ENCODE measurements at regions of chr14 and their contacts with region 1.

Region 1: GRCh38 chr14:69574263-69574953 is at the start of gene CCDC177:
- DNase-seq: peak; percentile 80
- H3K4me3 Mint-ChIP-seq: peak within 1 kb of the TSS; percentile 58
- H3K27ac Mint-ChIP-seq: no peak within 1 kb of the TSS
- H3K4me1 Mint-ChIP-seq: peaks cover 11% of the 10 kb centered on the region
- H3K27me3 Mint-ChIP-seq: peaks cover 48% of the 10 kb centered on the region
- total RNA-seq, gene CCDC177: not detected

Region 2: DNA sequence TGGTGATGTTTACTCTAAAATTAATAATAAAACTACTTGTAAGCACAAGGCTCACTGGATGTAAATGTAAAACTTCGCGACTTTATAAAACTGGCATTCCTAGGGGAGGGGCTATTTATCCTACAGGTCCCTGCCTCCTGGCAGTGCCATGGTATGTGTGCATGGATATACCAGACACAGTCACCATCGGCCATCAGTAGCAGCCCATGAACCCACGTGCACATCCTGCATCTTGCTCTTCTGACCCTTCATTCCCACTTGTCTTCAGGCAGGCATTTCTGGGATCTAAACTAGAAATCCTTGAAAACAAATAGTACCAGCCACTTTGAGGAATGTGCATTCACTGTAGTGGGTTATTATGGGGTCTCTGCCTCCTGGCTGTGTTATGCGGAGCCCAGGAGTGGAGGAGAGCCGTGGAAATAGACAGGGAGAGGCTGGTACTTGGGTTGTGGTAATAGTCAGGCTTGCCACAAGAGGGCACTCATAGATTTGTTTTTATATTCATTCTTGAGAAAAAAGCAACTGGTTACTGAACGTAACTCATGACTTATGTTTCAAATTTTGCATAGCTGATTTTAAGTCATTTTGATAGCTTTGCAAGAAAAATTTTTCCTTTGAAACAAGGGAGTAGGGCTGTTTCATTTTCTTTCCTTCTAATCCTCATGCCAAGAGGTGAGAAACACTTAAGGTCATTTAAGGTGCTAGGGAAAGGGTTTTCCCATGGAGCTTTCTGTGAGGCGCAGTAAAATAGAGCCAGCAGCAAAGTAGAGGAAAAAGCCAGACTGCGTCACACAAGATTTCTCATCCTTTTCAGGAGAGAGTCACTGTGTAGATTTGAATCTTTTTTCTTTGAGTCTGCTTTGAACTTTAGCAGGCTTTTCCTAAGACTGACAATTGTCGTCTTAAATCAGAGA is 331.8 kb before region 1 on chr14:
- CTCF ChIA-PET with region 1: interaction called, 22 read pairs
- POLR2A ChIA-PET with region 1: no interaction called
- intact Hi-C with region 1: loop called (anchors 1 kb)
- DNase-seq: peak; percentile 62
- H3K4me3 Mint-ChIP-seq: no peak overlapping the region
- H3K27ac Mint-ChIP-seq: no peak overlapping the region
- H3K4me1 Mint-ChIP-seq: no peaks in the 10 kb centered on the region
- H3K27me3 Mint-ChIP-seq: no peaks in the 10 kb centered on the region

Region 3: GRCh38 chr14:69475194-69475818 is 99.1 kb before region 1 on chr14:
- CTCF ChIA-PET with region 1: interaction called, 12 read pairs
- POLR2A ChIA-PET with region 1: no interaction called
- intact Hi-C with region 1: no loop called
- DNase-seq: no peak
- H3K4me3 Mint-ChIP-seq: no peak overlapping the region
- H3K27ac Mint-ChIP-seq: no peak overlapping the region
- H3K4me1 Mint-ChIP-seq: no peaks in the 10 kb centered on the region
- H3K27me3 Mint-ChIP-seq: no peaks in the 10 kb centered on the region

Region 4: DNA sequence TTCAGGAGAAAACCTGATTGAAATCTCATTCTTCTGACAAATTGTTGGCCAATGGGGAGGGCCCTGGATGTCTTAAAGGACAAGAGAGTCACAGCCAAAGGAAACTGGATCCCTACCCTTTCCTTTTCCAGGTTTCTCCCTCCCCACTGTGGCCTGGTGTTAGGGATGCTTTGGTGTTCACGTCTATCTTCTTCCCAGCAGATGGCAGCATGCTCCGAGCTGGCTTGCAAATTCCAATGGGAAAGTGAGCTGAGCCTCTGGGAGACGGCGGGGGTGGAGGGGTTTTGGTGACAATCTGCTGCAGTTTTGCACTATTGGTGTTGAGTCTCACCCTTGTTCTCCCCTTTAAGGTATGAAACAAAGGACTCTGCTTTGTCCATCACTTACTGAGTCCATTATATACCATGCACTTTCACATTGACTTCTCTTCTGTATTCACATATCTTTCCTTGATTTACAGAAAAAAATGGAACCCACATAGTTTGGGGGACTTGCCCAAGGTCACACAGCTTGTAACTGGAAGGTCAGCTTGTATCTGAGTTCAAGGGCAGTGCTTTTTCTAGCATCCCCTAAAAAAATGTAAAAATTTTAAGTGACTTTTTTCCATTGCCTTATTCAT is 39.1 kb before region 1 on chr14:
- CTCF ChIA-PET with region 1: interaction called, 4 read pairs
- POLR2A ChIA-PET with region 1: no interaction called
- intact Hi-C with region 1: loop called (anchors 1 kb)
- DNase-seq: no peak
- H3K4me3 Mint-ChIP-seq: no peak overlapping the region
- H3K27ac Mint-ChIP-seq: no peak overlapping the region
- H3K4me1 Mint-ChIP-seq: no peaks in the 10 kb centered on the region
- H3K27me3 Mint-ChIP-seq: peaks cover 11% of the 10 kb centered on the region

Region 5: DNA sequence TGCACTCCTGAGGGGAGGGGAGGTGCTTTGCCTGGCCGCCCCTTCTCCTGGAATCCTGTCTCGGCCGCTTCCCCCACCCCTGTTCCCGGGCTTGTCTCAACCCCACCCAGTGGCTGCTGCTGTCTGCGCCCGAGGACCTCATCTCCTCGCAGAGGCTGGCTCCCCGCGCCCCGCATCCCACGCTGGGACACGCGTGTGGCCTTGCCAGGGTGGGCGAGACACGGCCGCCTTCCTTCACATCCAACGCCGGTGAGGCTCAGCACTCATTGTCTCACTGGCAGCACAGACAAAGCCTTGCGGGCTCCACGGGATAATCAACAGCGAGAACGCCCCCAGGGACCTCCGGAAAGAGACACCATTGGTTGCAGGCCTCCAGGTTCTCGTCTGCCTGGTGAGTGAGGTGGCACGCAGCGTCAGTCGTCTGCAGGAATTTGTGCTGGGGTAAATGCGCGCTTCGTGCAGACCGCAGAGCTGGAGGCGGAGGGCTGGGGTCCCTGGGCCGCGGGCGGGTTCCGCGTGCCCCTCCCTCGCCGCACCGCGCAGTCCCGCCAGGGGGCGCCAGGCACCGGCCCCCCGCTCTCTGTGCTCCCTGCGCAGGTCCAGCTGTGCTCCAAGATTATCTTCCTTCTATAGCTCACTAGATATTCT is 26.6 kb before region 1 on chr14:
- CTCF ChIA-PET with region 1: interaction called, 47 read pairs
- POLR2A ChIA-PET with region 1: no interaction called
- intact Hi-C with region 1: loop called (anchors 1 kb)
- DNase-seq: peak; percentile 44
- H3K4me3 Mint-ChIP-seq: no peak overlapping the region
- H3K27ac Mint-ChIP-seq: no peak overlapping the region
- H3K4me1 Mint-ChIP-seq: peaks cover 11% of the 10 kb centered on the region
- H3K27me3 Mint-ChIP-seq: peaks cover 40% of the 10 kb centered on the region

Region 6: GRCh38 chr14:69559581-69560011 is 14.8 kb before region 1 on chr14:
- CTCF ChIA-PET with region 1: interaction called, 16 read pairs
- POLR2A ChIA-PET with region 1: no interaction called
- intact Hi-C with region 1: no loop called
- DNase-seq: no peak
- H3K4me3 Mint-ChIP-seq: no peak overlapping the region
- H3K27ac Mint-ChIP-seq: no peak overlapping the region
- H3K4me1 Mint-ChIP-seq: no peaks in the 10 kb centered on the region
- H3K27me3 Mint-ChIP-seq: peaks cover 20% of the 10 kb centered on the region

Region 7: GRCh38 chr14:69586404-69586803 is 12.0 kb after region 1 on chr14:
- CTCF ChIA-PET with region 1: interaction called, 13 read pairs
- POLR2A ChIA-PET with region 1: no interaction called
- intact Hi-C with region 1: no loop called
- DNase-seq: no peak
- H3K4me3 Mint-ChIP-seq: no peak overlapping the region
- H3K27ac Mint-ChIP-seq: no peak overlapping the region
- H3K4me1 Mint-ChIP-seq: no peaks in the 10 kb centered on the region
- H3K27me3 Mint-ChIP-seq: no peaks in the 10 kb centered on the region

Region 8: GRCh38 chr14:69695322-69696203 is 121.2 kb after region 1 on chr14:
- CTCF ChIA-PET with region 1: no interaction called
- POLR2A ChIA-PET with region 1: no interaction called
- intact Hi-C with region 1: no loop called
- DNase-seq: no peak
- H3K4me3 Mint-ChIP-seq: no peak overlapping the region
- H3K27ac Mint-ChIP-seq: peak overlapping the region; percentile 59
- H3K4me1 Mint-ChIP-seq: peaks cover 81% of the 10 kb centered on the region
- H3K27me3 Mint-ChIP-seq: no peaks in the 10 kb centered on the region

Measured in activated CD4-positive, alpha-beta memory T cell treated with anti-CD3 and anti-CD28 coated beads for 36 hours (primary cell).